ENCODE measurements at regions of chrX and their contacts with region 1.

Region 1: DNA sequence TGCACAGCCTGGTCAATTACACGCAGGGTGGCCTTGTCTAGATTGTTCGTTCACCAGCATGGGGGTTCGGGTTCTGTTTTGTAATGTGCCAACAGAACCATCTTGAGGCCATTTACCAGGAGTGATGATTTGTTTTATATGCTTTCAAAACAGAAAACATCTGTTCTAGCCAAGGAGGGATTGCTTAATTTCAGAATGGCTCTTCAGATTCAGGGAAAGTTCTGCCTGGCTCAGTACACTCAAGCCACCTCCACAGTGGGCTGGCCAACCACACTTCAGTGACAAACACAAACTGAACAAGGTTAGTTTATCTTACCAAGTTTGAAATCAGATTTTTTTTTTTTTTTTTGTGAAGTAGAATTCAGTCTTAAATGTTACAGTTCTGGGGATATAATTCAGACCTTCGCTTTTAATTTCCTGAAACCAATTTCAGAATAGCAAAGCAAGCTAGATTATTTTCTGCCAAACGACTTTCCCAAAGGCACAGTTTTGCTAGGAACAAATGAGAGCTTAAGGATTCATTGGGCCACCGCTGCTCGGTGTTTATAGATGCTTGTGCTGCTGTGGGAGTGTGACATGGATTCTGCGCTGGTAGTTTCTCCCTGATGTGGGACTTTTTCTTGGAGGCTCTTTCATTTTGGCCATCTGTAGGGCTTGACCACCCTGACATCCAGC is 23.4 kb downstream of the SMS start:
- DNase-seq: no peak
- H3K4me3 ChIP-seq: no peak overlapping the region
- H3K27ac ChIP-seq: peak overlapping the region in 3 of 4 donors; percentile 1 to 61 (median 42)
- H3K4me1 ChIP-seq: peaks cover 0 to 32% (median 18%) of the 10 kb centered on the region in 4 donors
- H3K27me3 ChIP-seq: no peaks in the 10 kb centered on the region
- CTCF ChIP-seq: no peak
- EP300 ChIP-seq: no peak
- POLR2A ChIP-seq: no peak

Region 2: GRCh38 chrX:21756785-21757529 is 206.9 kb before region 1 on chrX:
- intact Hi-C with region 1: loop called (anchors 10 kb)
- DNase-seq: no peak
- H3K4me3 ChIP-seq: peak overlapping the region; percentile 13 to 47 (median 43)
- H3K27ac ChIP-seq: peak overlapping the region in 3 of 4 donors; percentile 64 to 75 (median 74)
- H3K4me1 ChIP-seq: peaks cover 0 to 4% (median 0%) of the 10 kb centered on the region in 4 donors
- H3K27me3 ChIP-seq: no peaks in the 10 kb centered on the region
- CTCF ChIP-seq: no peak
- EP300 ChIP-seq: no peak
- POLR2A ChIP-seq: no peak

Region 3: GRCh38 chrX:21839334-21840192 is 124.3 kb before region 1 on chrX and contains the start of gene MBTPS2:
- intact Hi-C with region 1: loop called (anchors 5 kb)
- DNase-seq: peak; percentile 93
- H3K4me3 ChIP-seq: peak within 1 kb of the TSS; percentile 56 to 72 (median 64)
- H3K27ac ChIP-seq: peak within 1 kb of the TSS; percentile 70 to 88 (median 81)
- H3K4me1 ChIP-seq: peaks cover 0 to 8% (median 3%) of the 10 kb centered on the region in 4 donors
- H3K27me3 ChIP-seq: no peaks in the 10 kb centered on the region
- CTCF ChIP-seq: no peak
- EP300 ChIP-seq: no peak
- POLR2A ChIP-seq: peak; percentile 18 to 58
- total RNA-seq, gene MBTPS2: 9.9 to 15.8 (median 12.7) TPM

Region 4: GRCh38 chrX:22196134-22196533 is 232.3 kb after region 1 on chrX:
- intact Hi-C with region 1: no loop called
- DNase-seq: no peak
- H3K4me3 ChIP-seq: no peak overlapping the region
- H3K27ac ChIP-seq: no peak overlapping the region
- H3K4me1 ChIP-seq: no peaks in the 10 kb centered on the region
- H3K27me3 ChIP-seq: no peaks in the 10 kb centered on the region
- CTCF ChIP-seq: no peak
- EP300 ChIP-seq: no peak
- POLR2A ChIP-seq: no peak